ENCODE measurements at regions of chr3 and their contacts with region 1.

Region 1: DNA sequence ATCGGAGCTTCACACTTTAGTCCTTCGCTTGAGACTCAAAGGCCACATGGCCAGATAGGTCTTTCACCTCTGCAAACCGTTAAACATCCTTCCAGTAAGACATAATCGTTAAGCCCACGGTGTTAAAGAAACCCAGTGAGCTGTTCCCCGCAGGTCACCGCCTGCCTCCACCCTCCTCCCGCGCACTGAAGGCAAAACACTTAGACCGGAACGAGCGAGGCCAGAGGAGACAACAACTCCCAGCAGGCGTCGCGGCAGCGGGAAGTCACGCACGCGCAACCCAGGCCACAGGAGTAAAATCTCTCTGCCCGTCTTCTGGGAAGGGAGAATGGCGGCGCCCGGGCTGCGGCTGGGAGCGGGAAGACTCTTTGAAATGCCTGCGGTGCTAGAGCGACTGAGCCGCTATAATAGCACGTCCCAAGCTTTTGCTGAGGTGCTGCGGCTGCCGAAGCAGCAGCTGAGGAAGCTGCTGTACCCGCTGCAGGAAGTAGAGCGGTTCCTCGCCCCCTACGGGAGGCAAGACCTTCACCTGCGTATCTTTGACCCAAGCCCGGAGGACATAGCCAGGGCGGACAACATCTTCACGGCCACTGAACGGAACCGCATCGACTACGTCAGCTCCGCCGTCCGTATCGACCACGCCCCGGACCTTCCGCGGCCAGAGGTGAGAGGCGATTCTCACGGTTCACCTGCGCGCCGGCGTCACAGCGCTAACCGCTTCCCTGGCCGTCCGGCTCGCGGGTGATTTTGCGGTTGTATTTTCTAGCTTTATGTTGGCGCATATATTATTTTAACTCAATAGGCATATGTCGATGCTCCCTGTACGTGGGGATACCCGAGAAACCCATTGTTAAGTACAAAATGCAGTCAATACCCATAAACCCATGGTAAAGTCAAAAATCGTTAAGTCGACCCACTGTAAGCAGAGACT is at the start of gene GTPBP8:
- DNase-seq: peak; percentile 62 to 82 (median 78)
- ATAC-seq: peak; percentile 91
- H3K4me3 ChIP-seq: peak within 1 kb of the TSS; percentile 86
- H3K4me3 Mint-ChIP-seq: peak within 1 kb of the TSS; percentile 90 to 99 (median 95)
- H3K27ac ChIP-seq: peak within 1 kb of the TSS; percentile 86
- H3K27ac Mint-ChIP-seq: peak within 1 kb of the TSS; percentile 91 to 98 (median 95)
- H3K4me1 ChIP-seq: peaks cover 19 to 27% of the 10 kb centered on the region in 2 donors
- H3K4me1 Mint-ChIP-seq: peaks cover 30 to 85% (median 77%) of the 10 kb centered on the region in 7 donors
- H3K27me3 ChIP-seq: no peaks in the 10 kb centered on the region
- H3K27me3 Mint-ChIP-seq: no peaks in the 10 kb centered on the region
- total RNA-seq, gene GTPBP8: 12.6 to 49.1 (median 26.4) TPM

Region 2: DNA sequence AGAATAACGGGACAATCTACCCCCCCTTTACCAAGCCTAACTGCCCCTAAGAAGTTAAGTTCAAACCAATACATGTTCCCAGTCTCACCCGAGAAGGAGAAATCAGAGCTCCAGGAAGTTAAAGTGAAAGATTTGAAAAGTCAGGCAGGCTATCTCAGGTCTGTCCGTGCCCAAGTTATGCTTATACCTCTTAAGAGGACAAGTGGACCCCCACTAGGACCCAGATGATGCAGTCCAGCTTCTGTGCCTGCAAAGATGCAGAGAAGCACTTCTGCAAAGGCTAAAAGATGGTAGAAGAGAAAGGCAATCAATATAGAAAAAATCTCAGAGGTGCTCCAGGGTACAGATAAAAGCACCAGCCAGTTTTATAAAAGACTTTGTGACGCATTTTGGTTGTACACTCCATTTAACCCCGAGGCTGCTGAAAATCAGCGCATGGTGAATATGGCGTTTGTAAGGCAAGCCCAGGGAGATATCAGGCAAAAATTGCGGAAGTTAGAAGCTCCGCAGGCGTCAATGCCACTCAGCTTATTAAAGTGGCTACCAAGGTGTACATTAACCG is 687.1 kb before region 1 on chr3:
- CTCF ChIA-PET with region 1: no interaction called
- POLR2A ChIA-PET with region 1: no interaction called
- intact Hi-C with region 1: loop called in 1 of 2 experiments (anchors 10 kb)
- DNase-seq: peak in 7 of 9 donors; percentile 34 to 59 (median 43)
- ATAC-seq: peak; percentile 75
- H3K4me3 ChIP-seq: peak overlapping the region; percentile 82
- H3K4me3 Mint-ChIP-seq: no peak overlapping the region
- H3K27ac ChIP-seq: peak overlapping the region; percentile 61
- H3K27ac Mint-ChIP-seq: no peak overlapping the region
- H3K4me1 ChIP-seq: peaks cover 5 to 18% of the 10 kb centered on the region in 2 donors
- H3K4me1 Mint-ChIP-seq: peaks cover 0 to 3% (median under 1%) of the 10 kb centered on the region in 7 donors
- H3K27me3 ChIP-seq: no peaks in the 10 kb centered on the region
- H3K27me3 Mint-ChIP-seq: no peaks in the 10 kb centered on the region

Region 3: DNA sequence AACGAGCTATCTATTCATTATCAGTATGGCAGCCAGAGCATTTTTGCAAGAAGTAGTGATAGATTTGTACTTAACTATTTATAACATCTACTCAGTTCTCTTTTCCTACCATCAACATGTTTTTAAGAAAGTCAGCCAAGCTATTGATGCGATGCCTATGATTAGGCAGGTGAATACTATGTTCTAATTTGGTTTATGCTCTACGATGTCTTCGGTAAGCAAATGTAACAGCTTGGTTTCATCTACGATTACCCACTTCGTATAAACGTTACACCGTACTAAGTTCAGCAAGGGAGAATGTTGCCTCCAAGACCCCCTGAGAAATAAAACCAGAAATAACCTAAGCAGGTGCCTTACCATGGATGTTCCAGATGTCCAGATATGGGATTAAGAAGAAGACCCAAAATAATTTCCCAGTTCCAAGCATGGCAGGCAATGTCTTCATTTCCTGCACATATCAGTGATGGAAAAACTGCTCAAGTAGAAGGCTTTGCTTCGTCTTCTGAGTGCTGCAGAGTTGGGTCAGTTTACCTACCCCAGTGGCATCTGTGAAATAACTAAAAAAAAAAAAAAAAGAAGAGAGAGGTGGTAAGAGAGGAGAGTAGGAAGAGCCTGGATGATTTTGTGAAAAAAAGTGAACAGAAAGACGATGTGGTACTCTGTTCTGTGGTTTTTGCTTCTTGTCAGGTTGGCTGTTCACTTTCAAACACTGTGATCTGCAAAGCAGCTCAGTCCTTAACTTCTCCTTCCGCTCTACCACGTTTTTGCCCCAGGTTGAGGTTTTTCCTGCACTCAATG is 491.8 kb before region 1 on chr3 and contains the start of gene BTLA:
- CTCF ChIA-PET with region 1: no interaction called
- POLR2A ChIA-PET with region 1: no interaction called
- intact Hi-C with region 1: loop called in 1 of 2 experiments (anchors 5 kb)
- DNase-seq: peak in 7 of 9 donors; percentile 45 to 65 (median 50)
- ATAC-seq: peak; percentile 81
- H3K4me3 ChIP-seq: peak within 1 kb of the TSS; percentile 80
- H3K4me3 Mint-ChIP-seq: peak within 1 kb of the TSS; percentile 85 to 100 (median 97)
- H3K27ac ChIP-seq: peak within 1 kb of the TSS; percentile 68
- H3K27ac Mint-ChIP-seq: peak within 1 kb of the TSS; percentile 88 to 99 (median 94)
- H3K4me1 ChIP-seq: peaks cover 14 to 26% of the 10 kb centered on the region in 2 donors
- H3K4me1 Mint-ChIP-seq: peaks cover 34 to 63% (median 55%) of the 10 kb centered on the region in 7 donors
- H3K27me3 ChIP-seq: no peaks in the 10 kb centered on the region
- H3K27me3 Mint-ChIP-seq: no peaks in the 10 kb centered on the region
- total RNA-seq, gene BTLA: 15.6 to 29.5 (median 26.1) TPM

Region 4: DNA sequence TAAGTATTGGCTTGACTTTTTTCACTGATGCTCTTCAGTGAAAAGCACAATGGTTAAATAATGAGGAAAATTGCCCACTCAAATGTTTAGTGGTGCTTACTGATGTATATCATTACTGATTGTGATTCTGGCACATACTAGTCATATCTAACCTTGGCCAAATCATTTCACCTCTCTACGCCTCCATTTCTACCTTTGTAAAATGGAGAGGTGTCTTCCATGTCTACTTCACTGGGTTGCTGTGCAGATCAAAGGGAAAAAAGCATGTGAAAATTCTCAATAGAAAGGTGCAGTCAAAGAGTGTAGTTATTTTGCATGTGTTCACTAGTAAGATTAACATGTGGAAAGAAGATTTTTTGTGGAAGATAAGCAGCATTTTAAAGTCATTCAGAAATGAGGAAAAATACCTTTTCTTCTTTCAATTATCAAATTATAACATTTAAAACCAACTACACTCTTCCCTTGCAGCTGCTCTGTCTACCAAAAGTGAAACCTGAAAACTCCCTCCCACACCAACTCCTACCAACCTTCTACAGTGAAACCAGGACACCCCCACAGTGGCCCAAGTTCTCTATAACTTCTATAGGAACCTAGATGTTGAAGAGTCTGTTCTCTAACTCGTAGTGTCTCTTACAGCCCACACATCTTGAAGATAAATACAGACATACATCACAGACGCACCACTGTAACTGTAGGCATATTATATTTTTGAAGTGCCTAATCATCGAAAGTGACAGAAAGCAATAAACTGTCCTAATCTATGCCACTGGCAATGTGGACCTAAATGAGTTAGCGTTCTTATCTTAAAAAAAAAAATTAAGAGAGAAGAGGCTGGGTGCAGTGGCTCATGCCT is 17.4 kb before region 1 on chr3:
- CTCF ChIA-PET with region 1: interaction called, 14 read pairs
- POLR2A ChIA-PET with region 1: interaction called, 14 read pairs
- intact Hi-C with region 1: loop called (anchors 1 kb)
- DNase-seq: peak in 8 of 9 donors; percentile 31 to 64 (median 52)
- ATAC-seq: peak; percentile 87
- H3K4me3 ChIP-seq: peak overlapping the region; percentile 72
- H3K4me3 Mint-ChIP-seq: peak overlapping the region; percentile 83 to 98 (median 94)
- H3K27ac ChIP-seq: peak overlapping the region; percentile 80
- H3K27ac Mint-ChIP-seq: peak overlapping the region; percentile 86 to 97 (median 95)
- H3K4me1 ChIP-seq: peaks cover 28 to 43% of the 10 kb centered on the region in 2 donors
- H3K4me1 Mint-ChIP-seq: peaks cover 56 to 88% (median 74%) of the 10 kb centered on the region in 7 donors
- H3K27me3 ChIP-seq: no peaks in the 10 kb centered on the region
- H3K27me3 Mint-ChIP-seq: no peaks in the 10 kb centered on the region

Region 5: GRCh38 chr3:113019182-113020137 is 28.5 kb after region 1 on chr3:
- CTCF ChIA-PET with region 1: interaction called, 9 read pairs
- POLR2A ChIA-PET with region 1: interaction called, 38 read pairs
- intact Hi-C with region 1: loop called (anchors 1 kb)
- DNase-seq: peak; percentile 69 to 89 (median 74)
- ATAC-seq: peak; percentile 92
- H3K4me3 ChIP-seq: peak overlapping the region; percentile 81
- H3K4me3 Mint-ChIP-seq: peak overlapping the region; percentile 87 to 97 (median 92)
- H3K27ac ChIP-seq: peak overlapping the region; percentile 96
- H3K27ac Mint-ChIP-seq: peak overlapping the region; percentile 87 to 96 (median 91)
- H3K4me1 ChIP-seq: peaks cover 19 to 21% of the 10 kb centered on the region in 2 donors
- H3K4me1 Mint-ChIP-seq: peaks cover 44 to 87% (median 71%) of the 10 kb centered on the region in 7 donors
- H3K27me3 ChIP-seq: no peaks in the 10 kb centered on the region
- H3K27me3 Mint-ChIP-seq: no peaks in the 10 kb centered on the region

Measured in naive thymus-derived CD4-positive, alpha-beta T cell (primary cell).